ENCODE measurements at regions of chr1 and their contacts with region 1.

Region 1: DNA sequence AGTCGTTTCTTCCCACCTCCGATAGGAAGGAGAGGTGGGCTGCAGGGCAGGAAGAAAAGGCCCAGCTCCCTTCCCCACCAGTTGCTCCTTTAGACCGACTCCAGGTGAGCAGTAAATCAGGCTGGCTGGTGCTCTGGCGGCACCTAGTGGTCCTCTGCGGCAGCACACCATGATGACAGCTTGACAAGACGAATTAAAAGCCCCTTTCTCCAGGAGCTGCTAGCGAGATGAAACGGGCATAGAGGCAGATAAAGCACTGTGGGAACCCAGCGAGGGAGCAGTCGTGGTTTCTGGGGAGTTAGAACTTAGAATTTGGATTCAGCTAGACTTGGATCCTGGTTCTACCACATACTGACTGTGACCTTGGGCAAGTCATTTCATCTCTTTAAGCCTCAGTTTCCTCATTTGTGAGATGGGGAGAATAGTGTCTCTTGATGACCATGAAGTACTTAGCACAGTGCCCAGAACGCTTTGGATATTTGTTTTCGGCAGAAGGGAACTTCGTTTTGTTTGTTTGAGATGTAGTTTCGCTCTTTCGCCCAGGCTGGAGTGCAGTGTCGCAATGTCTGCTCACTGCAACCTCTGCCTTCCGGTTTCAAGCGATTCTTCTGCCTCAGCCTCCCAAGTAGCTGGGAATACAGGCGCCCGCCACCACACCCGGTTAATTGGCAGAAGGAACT is 21.8 kb upstream of the COL9A2 start:
- DNase-seq: peak; percentile 80 to 95 (median 89)
- ATAC-seq: peak; percentile 98
- H3K4me3 ChIP-seq: no peak overlapping the region
- H3K4me3 Mint-ChIP-seq: peak overlapping the region; percentile 42
- H3K27ac ChIP-seq: no peak overlapping the region
- H3K27ac Mint-ChIP-seq: peak overlapping the region; percentile 10
- H3K4me1 ChIP-seq: peaks cover 25% of the 10 kb centered on the region
- H3K4me1 Mint-ChIP-seq: peaks cover 41% of the 10 kb centered on the region
- H3K27me3 ChIP-seq: no peaks in the 10 kb centered on the region
- H3K27me3 Mint-ChIP-seq: no peaks in the 10 kb centered on the region
- CTCF ChIP-seq: peak; percentile 94

Region 2: DNA sequence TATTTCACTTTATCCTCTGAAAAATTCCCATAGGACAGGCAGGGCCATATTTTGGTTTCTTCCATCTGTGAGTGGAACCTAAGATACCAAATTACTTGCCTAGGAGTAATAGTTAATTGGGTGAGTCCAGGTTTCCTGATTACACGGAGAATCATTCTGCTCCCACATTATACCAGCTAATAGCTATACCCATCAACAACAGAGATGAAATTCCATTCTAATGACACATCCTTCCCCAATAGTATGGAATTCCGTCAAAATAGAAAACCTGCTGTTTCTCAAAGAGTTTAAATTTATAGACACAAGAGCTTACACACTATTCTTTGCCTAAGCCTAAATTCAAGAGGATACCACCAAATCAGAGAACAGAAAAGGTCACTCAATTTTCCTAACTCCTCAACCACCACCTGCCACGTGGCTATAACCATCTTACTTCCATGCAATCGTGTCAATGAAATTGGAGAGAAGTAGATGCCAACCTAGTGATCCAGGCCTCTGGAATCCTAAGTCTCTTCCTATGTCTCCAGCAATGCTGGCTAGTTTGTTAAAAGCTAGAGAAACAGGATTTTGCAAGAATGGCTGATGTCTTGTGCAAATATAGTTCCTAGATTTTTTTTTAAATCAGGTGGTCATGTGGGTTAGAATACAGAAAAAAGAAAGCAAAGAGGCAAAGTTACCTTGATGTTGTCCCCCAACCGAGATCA is 248.1 kb before region 1 on chr1:
- CTCF ChIA-PET with region 1: interaction called, 46 read pairs
- POLR2A ChIA-PET with region 1: no interaction called
- intact Hi-C with region 1: no loop called
- DNase-seq: no peak
- ATAC-seq: no peak
- H3K4me3 ChIP-seq: no peak overlapping the region
- H3K4me3 Mint-ChIP-seq: no peak overlapping the region
- H3K27ac ChIP-seq: no peak overlapping the region
- H3K27ac Mint-ChIP-seq: no peak overlapping the region
- H3K4me1 ChIP-seq: peaks cover 7% of the 10 kb centered on the region
- H3K4me1 Mint-ChIP-seq: peaks cover 17% of the 10 kb centered on the region
- H3K27me3 ChIP-seq: no peaks in the 10 kb centered on the region
- H3K27me3 Mint-ChIP-seq: no peaks in the 10 kb centered on the region
- CTCF ChIP-seq: no peak

Region 3: GRCh38 chr1:40185951-40186864 is 152.7 kb before region 1 on chr1:
- CTCF ChIA-PET with region 1: interaction called, 12 read pairs
- POLR2A ChIA-PET with region 1: no interaction called
- intact Hi-C with region 1: no loop called
- DNase-seq: peak in 5 of 9 experiments; percentile 11 to 54 (median 36)
- ATAC-seq: peak; percentile 78
- H3K4me3 ChIP-seq: no peak overlapping the region
- H3K4me3 Mint-ChIP-seq: no peak overlapping the region
- H3K27ac ChIP-seq: no peak overlapping the region
- H3K27ac Mint-ChIP-seq: peak overlapping the region; percentile 66
- H3K4me1 ChIP-seq: peaks cover 18% of the 10 kb centered on the region
- H3K4me1 Mint-ChIP-seq: peaks cover 55% of the 10 kb centered on the region
- H3K27me3 ChIP-seq: no peaks in the 10 kb centered on the region
- H3K27me3 Mint-ChIP-seq: no peaks in the 10 kb centered on the region
- CTCF ChIP-seq: no peak

Region 4: DNA sequence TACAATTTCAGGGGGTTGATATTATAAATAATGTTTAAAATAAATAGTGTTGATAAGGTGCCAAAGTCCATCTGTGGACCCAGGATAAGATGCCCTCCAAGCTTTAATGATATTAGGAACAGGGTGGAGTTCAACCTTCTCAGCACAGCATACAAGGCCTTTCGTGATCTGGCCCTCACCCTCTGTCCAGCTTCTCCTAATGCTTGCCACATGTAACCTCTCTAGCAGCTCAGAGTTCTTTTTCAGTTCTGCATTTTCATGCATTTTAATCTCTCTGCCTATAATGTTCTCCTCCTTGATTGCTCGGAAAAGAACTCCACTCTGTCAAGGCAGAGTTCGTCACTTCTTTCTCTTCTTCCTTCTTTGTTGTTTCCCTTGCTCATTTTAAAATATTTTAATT is 13.2 kb after region 1 on chr1:
- CTCF ChIA-PET with region 1: interaction called, 21 read pairs
- POLR2A ChIA-PET with region 1: no interaction called
- intact Hi-C with region 1: no loop called
- DNase-seq: no peak
- ATAC-seq: no peak
- H3K4me3 ChIP-seq: no peak overlapping the region
- H3K4me3 Mint-ChIP-seq: no peak overlapping the region
- H3K27ac ChIP-seq: no peak overlapping the region
- H3K27ac Mint-ChIP-seq: no peak overlapping the region
- H3K4me1 ChIP-seq: no peaks in the 10 kb centered on the region
- H3K4me1 Mint-ChIP-seq: no peaks in the 10 kb centered on the region
- H3K27me3 ChIP-seq: no peaks in the 10 kb centered on the region
- H3K27me3 Mint-ChIP-seq: no peaks in the 10 kb centered on the region
- CTCF ChIP-seq: no peak

Region 5: DNA sequence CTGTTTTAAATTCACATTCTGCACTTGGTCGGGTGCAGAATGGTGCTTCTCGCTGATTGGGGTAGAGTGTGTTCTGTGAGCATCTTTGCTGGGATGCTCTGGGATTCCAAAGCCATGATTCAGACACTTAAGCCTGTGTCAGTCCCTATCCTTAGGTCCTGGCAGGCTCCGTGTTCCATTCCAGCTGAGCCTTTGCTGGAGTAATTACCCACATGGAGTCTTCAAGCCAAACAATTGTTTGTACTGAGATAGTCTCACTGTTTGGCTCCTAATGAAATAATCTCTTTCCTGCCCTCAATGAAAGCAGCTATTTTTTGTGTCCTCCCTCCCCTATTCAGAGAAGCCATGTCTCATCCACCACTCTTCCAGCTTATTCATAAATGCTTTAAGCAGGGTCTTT is 53.3 kb after region 1 on chr1:
- CTCF ChIA-PET with region 1: interaction called, 109 read pairs
- POLR2A ChIA-PET with region 1: no interaction called
- intact Hi-C with region 1: no loop called
- DNase-seq: no peak
- ATAC-seq: no peak
- H3K4me3 ChIP-seq: no peak overlapping the region
- H3K4me3 Mint-ChIP-seq: peak overlapping the region; percentile 67
- H3K27ac ChIP-seq: peak overlapping the region; percentile 26 to 83
- H3K27ac Mint-ChIP-seq: peak overlapping the region; percentile 93
- H3K4me1 ChIP-seq: peaks cover 86% of the 10 kb centered on the region
- H3K4me1 Mint-ChIP-seq: peaks cover 94% of the 10 kb centered on the region
- H3K27me3 ChIP-seq: no peaks in the 10 kb centered on the region
- H3K27me3 Mint-ChIP-seq: no peaks in the 10 kb centered on the region
- CTCF ChIP-seq: no peak

Region 6: GRCh38 chr1:40416709-40417108 is 77.8 kb after region 1 on chr1:
- CTCF ChIA-PET with region 1: interaction called, 23 read pairs
- POLR2A ChIA-PET with region 1: interaction called, 3 read pairs
- intact Hi-C with region 1: no loop called
- DNase-seq: no peak
- ATAC-seq: no peak
- H3K4me3 ChIP-seq: no peak overlapping the region
- H3K4me3 Mint-ChIP-seq: no peak overlapping the region
- H3K27ac ChIP-seq: no peak overlapping the region
- H3K27ac Mint-ChIP-seq: no peak overlapping the region
- H3K4me1 ChIP-seq: peaks cover 34% of the 10 kb centered on the region
- H3K4me1 Mint-ChIP-seq: peaks cover 35% of the 10 kb centered on the region
- H3K27me3 ChIP-seq: no peaks in the 10 kb centered on the region
- H3K27me3 Mint-ChIP-seq: no peaks in the 10 kb centered on the region
- CTCF ChIP-seq: no peak

Measured in CD8-positive, alpha-beta T cell (primary cell).